ENCODE measurements at regions of chrX and their contacts with region 1.

Region 1: GRCh38 chrX:124917011-124917410 is 402.7 kb upstream of the TEX13C start:
- DNase-seq: no peak
- H3K4me3 ChIP-seq: no peak overlapping the region
- H3K27ac ChIP-seq: no peak overlapping the region
- H3K4me1 ChIP-seq: no peaks in the 10 kb centered on the region
- H3K27me3 ChIP-seq: no peaks in the 10 kb centered on the region
- CTCF ChIP-seq: no peak
- EP300 ChIP-seq: no peak
- POLR2A ChIP-seq: no peak

Region 2: DNA sequence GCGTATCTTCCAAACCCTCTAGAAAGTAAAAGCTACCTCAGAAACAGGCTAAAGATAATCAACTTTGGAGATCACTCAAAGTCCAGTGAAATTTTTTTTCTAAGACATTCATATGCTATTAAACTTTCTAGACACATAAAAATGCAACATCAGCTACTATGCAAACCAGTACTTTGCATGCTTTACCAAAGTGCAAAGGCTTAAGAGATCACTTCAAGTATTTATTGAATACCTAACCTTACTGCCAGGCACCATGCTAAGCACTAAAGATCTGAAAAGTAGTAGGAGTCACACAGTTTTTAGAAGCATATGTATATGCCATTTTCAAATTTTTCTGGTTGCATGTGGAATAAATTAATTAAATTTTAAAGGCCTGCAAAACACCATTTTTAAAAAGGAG is 1300.0 kb before region 1 on chrX:
- intact Hi-C with region 1: no loop called
- DNase-seq: no peak
- H3K4me3 ChIP-seq: no peak overlapping the region
- H3K27ac ChIP-seq: no peak overlapping the region
- H3K4me1 ChIP-seq: no peaks in the 10 kb centered on the region
- H3K27me3 ChIP-seq: no peaks in the 10 kb centered on the region
- CTCF ChIP-seq: no peak
- EP300 ChIP-seq: no peak
- POLR2A ChIP-seq: no peak

Region 3: GRCh38 chrX:126900937-126901336 is 1983.9 kb after region 1 on chrX:
- intact Hi-C with region 1: loop called in 1 of 4 experiments (anchors 5 kb)
- DNase-seq: no peak
- H3K4me3 ChIP-seq: no peak overlapping the region
- H3K27ac ChIP-seq: no peak overlapping the region
- H3K4me1 ChIP-seq: no peaks in the 10 kb centered on the region
- H3K27me3 ChIP-seq: no peaks in the 10 kb centered on the region
- CTCF ChIP-seq: no peak
- EP300 ChIP-seq: no peak
- POLR2A ChIP-seq: no peak

Measured in ovary (tissue), 10 donors.